H1 (cell line): ENCODE measurements at regions of chr14 and their contacts with region 1.

Region 1: GRCh38 chr14:93206793-93207467 is at the starts of genes GON7 and UBR7:
- DNase-seq: peak; percentile 91 to 95
- H3K4me3 ChIP-seq: peak within 1 kb of the TSS; percentile 77 to 99 (median 93)
- H3K27ac ChIP-seq: peak within 1 kb of the TSS; percentile 65
- H3K4me1 ChIP-seq: peaks cover 0 to 6% (median 4%) of the 10 kb centered on the region in 4 experiments; a peak in 3 of 7 replicates
- H3K27me3 ChIP-seq: no peaks in the 10 kb centered on the region
- CTCF ChIP-seq: peak; percentile 19 to 33 (median 29); a peak in 3 of 4 replicates
- EP300 ChIP-seq: no peak
- POLR2A ChIP-seq: peak; percentile 52 to 75
- RAD21 ChIP-seq: 0 out of 4 replicates have a peak, but pooled peaks of 1 of the 2 experiments have one; percentile 8
- total RNA-seq, gene GON7: 8.8 and 9.9 TPM in 2 replicates
- total RNA-seq, gene UBR7: 28.4 and 29.4 TPM in 2 replicates

Region 2: GRCh38 chr14:92982956-92983355 is 224.0 kb before region 1 on chr14:
- CTCF ChIA-PET with region 1: no interaction called
- POLR2A ChIA-PET with region 1: no interaction called
- DNase-seq: no peak
- H3K4me3 ChIP-seq: no peak overlapping the region
- H3K27ac ChIP-seq: no peak overlapping the region
- H3K4me1 ChIP-seq: peaks cover 0 to 3% (median 0%) of the 10 kb centered on the region in 4 experiments; a peak in 1 of 7 replicates
- H3K27me3 ChIP-seq: no peaks in the 10 kb centered on the region
- CTCF ChIP-seq: no peak
- EP300 ChIP-seq: no peak
- POLR2A ChIP-seq: no peak
- RAD21 ChIP-seq: no peak

Region 3: DNA sequence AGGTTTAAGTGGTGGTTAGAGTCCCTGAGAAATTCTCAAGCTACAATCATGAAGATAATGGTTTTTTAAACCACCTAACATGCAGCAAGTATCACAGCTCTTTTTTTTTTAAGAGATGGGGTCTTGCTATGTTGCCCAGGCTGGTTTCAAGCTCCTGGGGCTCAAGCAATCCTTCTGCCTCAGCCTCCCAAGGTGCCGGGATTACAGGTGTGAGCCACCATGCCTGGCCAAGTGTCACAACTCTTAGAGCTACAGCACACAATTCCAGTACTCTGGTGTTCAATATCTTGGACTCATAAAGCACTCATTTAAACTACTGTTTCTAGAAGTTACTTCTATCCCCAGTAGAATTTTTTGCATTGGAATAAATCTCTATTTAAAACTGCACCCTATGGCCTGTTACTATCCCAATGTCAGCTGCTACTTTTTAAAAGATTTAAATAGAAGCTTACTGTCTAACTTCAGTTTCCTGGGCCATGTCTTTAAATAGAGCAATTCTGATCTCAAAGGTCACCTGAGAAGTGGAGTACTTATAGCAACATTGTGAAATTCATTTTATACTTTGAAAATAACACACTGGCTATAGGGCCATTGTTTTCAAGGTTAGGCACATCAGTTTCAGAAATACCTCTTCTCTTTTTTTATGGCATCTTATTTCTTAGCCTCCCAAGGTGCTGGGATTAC is 11.5 kb before region 1 on chr14:
- CTCF ChIA-PET with region 1: interaction called, 14 read pairs
- POLR2A ChIA-PET with region 1: interaction called, 4 read pairs
- DNase-seq: no peak
- H3K4me3 ChIP-seq: no peak overlapping the region
- H3K27ac ChIP-seq: no peak overlapping the region
- H3K4me1 ChIP-seq: no peaks in the 10 kb centered on the region
- H3K27me3 ChIP-seq: no peaks in the 10 kb centered on the region
- CTCF ChIP-seq: no peak
- EP300 ChIP-seq: no peak
- POLR2A ChIP-seq: no peak
- RAD21 ChIP-seq: no peak

Region 4: DNA sequence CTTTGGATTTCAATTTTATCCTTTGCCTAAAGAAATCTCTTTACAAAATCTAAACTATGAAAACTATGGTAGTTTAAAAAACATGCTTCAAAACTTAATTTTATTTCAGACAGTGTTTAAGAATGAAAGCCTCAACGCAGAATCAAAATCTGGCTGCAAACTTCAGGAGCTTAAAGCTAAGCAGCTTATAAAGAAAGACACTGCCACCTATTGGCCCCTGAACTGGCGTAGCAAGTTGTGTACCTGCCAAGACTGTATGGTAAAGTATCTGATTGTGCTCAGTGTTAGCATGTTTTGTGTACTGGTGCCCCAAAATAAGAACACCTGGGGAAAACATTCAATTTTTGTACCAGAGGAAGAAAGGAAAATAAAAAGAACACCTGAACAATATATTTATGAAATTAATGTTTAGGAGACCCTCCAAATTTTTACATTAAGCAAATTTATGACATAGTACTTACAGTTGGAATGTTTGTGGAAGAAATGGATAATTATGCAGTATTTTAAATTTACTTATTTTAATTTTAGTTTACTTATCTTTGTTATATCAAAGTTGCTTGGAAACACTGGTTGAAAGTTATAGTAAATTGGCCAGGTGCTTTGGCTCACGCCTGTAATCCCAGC is 12.3 kb after region 1 on chr14:
- CTCF ChIA-PET with region 1: interaction called, 27 read pairs
- POLR2A ChIA-PET with region 1: interaction called, 3 read pairs
- DNase-seq: no peak
- H3K4me3 ChIP-seq: no peak overlapping the region
- H3K27ac ChIP-seq: no peak overlapping the region
- H3K4me1 ChIP-seq: no peaks in the 10 kb centered on the region
- H3K27me3 ChIP-seq: no peaks in the 10 kb centered on the region
- CTCF ChIP-seq: peak in 2 of 3 experiments; percentile 72 to 77; a peak in 3 of 4 replicates
- EP300 ChIP-seq: no peak
- POLR2A ChIP-seq: no peak
- RAD21 ChIP-seq: peak; percentile 76 to 86

Region 5: GRCh38 chr14:93346929-93347721 is 140.2 kb after region 1 on chr14 and contains the start of gene COX8C:
- CTCF ChIA-PET with region 1: no interaction called
- POLR2A ChIA-PET with region 1: no interaction called
- DNase-seq: no peak
- H3K4me3 ChIP-seq: no peak within 1 kb of the TSS
- H3K27ac ChIP-seq: no peak within 1 kb of the TSS
- H3K4me1 ChIP-seq: peaks cover 0 to 10% (median 5%) of the 10 kb centered on the region in 4 experiments; a peak in 4 of 7 replicates
- H3K27me3 ChIP-seq: no peaks in the 10 kb centered on the region
- CTCF ChIP-seq: peak in 2 of 3 experiments; percentile 16 to 31; a peak in 2 of 4 replicates
- EP300 ChIP-seq: no peak
- POLR2A ChIP-seq: no peak
- RAD21 ChIP-seq: 0 out of 4 replicates have a peak, but pooled peaks of 1 of the 2 experiments have one; percentile 1
- total RNA-seq, gene COX8C: not detected in 2 replicates